ENCODE measurements at regions of chr15 and their contacts with region 1.

Region 1: DNA sequence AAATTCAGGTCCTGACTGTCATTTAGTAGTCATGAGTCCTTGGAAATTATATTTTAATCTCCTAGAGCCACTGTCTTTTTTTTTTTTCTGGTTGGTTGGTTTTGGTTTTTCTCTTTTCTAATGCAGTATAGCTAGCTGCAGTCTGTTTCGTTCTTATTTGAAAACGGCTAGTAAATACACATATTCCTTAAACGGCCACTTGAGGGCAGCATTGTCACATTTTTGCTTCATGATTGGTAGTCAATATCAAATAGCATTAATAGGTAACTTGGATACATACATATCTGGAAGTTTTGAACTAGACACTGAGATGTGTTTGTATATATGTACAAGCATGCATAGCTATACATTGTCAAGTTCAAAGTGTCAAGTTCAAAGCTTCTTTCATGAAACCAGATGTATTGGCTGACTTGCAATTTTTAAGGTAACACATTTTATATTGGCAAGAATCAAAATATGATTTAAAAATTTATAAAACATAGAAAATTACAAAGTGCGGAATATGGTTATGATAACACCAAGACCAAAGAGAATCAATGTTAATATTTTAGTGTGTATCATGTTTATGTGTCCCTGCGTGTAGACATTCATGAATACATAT is 22.5 kb downstream of the GABRA5 start:
- DNase-seq: peak; percentile 51
- H3K4me3 ChIP-seq: no peak overlapping the region
- H3K27ac ChIP-seq: no peak overlapping the region
- H3K4me1 ChIP-seq: no peaks in the 10 kb centered on the region
- H3K27me3 ChIP-seq: no peaks in the 10 kb centered on the region
- CTCF ChIP-seq: peak; percentile 62

Region 2: DNA sequence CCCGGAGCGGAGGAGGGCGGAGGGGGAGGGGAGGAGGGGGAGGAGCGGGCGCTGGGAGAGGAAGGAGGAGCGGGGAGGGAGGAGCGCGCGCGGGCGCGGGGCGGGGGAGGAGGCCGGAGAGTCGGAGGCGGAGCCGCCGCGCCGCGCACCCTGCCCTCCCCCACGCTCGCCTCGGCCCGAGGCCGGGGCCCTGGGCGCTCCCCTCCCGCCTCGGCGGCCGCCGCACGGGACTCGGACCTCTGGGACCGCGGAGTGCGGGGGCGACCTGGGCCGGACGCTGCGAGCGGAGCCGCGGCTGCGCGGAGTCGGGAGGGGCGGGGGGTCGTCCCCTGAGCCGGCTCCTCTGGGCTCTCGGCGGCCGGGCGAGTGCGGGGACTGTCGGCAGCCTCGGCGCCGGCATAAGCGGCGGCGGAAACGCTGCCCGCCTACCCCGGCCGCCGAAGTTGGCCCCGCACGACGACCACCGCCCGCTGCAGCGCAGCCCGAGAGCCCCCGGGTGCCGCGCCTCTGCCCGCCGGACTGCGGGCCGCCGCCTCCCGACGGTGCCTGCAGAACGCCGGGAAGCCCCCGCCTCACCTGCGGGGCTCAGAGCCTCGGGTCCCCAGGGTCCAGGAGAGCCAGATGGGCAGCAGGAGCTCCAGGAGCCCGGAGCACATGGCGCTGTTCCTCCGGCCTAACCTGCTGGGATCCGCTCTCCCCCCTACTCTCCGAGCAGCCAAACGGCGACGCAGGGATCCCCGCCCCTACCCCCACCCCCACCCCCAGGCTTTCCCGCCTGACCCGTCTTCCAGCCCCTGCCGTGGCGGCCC is 116.1 kb before region 1 on chr15:
- intact Hi-C with region 1: no loop called
- DNase-seq: peak; percentile 25
- H3K4me3 ChIP-seq: no peak overlapping the region
- H3K27ac ChIP-seq: no peak overlapping the region
- H3K4me1 ChIP-seq: no peaks in the 10 kb centered on the region
- H3K27me3 ChIP-seq: peaks cover 22% of the 10 kb centered on the region
- CTCF ChIP-seq: no peak

Region 3: GRCh38 chr15:27017168-27017809 is 127.9 kb after region 1 on chr15:
- intact Hi-C with region 1: loop called (anchors 5 kb)
- DNase-seq: no peak
- H3K4me3 ChIP-seq: no peak overlapping the region
- H3K27ac ChIP-seq: no peak overlapping the region
- H3K4me1 ChIP-seq: no peaks in the 10 kb centered on the region
- H3K27me3 ChIP-seq: no peaks in the 10 kb centered on the region
- CTCF ChIP-seq: no peak